Panc1 (cell line): ENCODE measurements at regions of chr5 and their contacts with region 1.

Region 1: GRCh38 chr5:44332285-44332971 is 56.8 kb downstream of the FGF10 start:
- DNase-seq: peak; percentile 25
- ATAC-seq: no peak
- H3K4me3 ChIP-seq: no peak overlapping the region
- H3K27ac ChIP-seq: no peak overlapping the region
- H3K4me1 ChIP-seq: no peaks in the 10 kb centered on the region
- H3K27me3 ChIP-seq: no peaks in the 10 kb centered on the region
- CTCF ChIP-seq: peak; percentile 53; the same call in 1 of the 2 replicates

Region 2: GRCh38 chr5:43729846-43730478 is 602.5 kb before region 1 on chr5:
- CTCF ChIA-PET with region 1: no interaction called
- POLR2A ChIA-PET with region 1: no interaction called
- in situ Hi-C with region 1: no loop called
- intact Hi-C with region 1: loop called (anchors 10 kb)
- DNase-seq: no peak
- ATAC-seq: no peak
- H3K4me3 ChIP-seq: no peak overlapping the region
- H3K27ac ChIP-seq: no peak overlapping the region
- H3K4me1 ChIP-seq: no peaks in the 10 kb centered on the region
- H3K27me3 ChIP-seq: no peaks in the 10 kb centered on the region
- CTCF ChIP-seq: peak; percentile 59; the same call in 1 of the 2 replicates

Region 3: DNA sequence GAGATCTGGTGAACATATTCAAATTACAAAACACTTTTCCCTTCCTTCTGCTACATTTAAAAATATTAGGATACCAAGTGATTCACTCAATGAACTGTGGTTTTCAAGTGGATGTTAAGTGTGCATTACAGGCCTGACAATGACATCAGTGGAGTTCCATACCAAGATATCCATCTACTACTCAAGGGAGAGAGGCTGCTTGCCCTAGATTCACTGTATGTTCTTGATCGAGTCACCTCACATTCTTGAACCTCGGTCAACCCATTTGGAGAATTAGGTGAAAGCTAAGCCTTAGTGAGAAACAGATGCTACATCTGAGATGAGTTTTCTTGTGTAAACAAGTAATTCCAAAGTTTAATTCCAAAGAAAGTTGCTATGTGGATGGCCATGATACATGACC is 85.4 kb before region 1 on chr5:
- CTCF ChIA-PET with region 1: no interaction called
- POLR2A ChIA-PET with region 1: no interaction called
- in situ Hi-C with region 1: no loop called
- intact Hi-C with region 1: no loop called
- DNase-seq: no peak
- ATAC-seq: no peak
- H3K4me3 ChIP-seq: no peak overlapping the region
- H3K27ac ChIP-seq: no peak overlapping the region
- H3K4me1 ChIP-seq: no peaks in the 10 kb centered on the region
- H3K27me3 ChIP-seq: no peaks in the 10 kb centered on the region
- CTCF ChIP-seq: no peak

Region 4: GRCh38 chr5:44443172-44443571 is 110.7 kb after region 1 on chr5:
- CTCF ChIA-PET with region 1: no interaction called
- POLR2A ChIA-PET with region 1: no interaction called
- in situ Hi-C with region 1: no loop called
- intact Hi-C with region 1: no loop called
- DNase-seq: no peak
- ATAC-seq: no peak
- H3K4me3 ChIP-seq: no peak overlapping the region
- H3K27ac ChIP-seq: no peak overlapping the region
- H3K4me1 ChIP-seq: no peaks in the 10 kb centered on the region
- H3K27me3 ChIP-seq: no peaks in the 10 kb centered on the region
- CTCF ChIP-seq: no peak